ENCODE measurements at regions of chr7 and their contacts with region 1.

Region 1: GRCh38 chr7:74094224-74095101 is 10.9 kb downstream of the LIMK1 start:
- DNase-seq: peak; percentile 90
- H3K4me3 Mint-ChIP-seq: peak overlapping the region; percentile 66
- H3K27ac Mint-ChIP-seq: peak overlapping the region; percentile 75
- H3K4me1 Mint-ChIP-seq: peaks cover 18% of the 10 kb centered on the region
- H3K27me3 Mint-ChIP-seq: no peaks in the 10 kb centered on the region

Region 2: DNA sequence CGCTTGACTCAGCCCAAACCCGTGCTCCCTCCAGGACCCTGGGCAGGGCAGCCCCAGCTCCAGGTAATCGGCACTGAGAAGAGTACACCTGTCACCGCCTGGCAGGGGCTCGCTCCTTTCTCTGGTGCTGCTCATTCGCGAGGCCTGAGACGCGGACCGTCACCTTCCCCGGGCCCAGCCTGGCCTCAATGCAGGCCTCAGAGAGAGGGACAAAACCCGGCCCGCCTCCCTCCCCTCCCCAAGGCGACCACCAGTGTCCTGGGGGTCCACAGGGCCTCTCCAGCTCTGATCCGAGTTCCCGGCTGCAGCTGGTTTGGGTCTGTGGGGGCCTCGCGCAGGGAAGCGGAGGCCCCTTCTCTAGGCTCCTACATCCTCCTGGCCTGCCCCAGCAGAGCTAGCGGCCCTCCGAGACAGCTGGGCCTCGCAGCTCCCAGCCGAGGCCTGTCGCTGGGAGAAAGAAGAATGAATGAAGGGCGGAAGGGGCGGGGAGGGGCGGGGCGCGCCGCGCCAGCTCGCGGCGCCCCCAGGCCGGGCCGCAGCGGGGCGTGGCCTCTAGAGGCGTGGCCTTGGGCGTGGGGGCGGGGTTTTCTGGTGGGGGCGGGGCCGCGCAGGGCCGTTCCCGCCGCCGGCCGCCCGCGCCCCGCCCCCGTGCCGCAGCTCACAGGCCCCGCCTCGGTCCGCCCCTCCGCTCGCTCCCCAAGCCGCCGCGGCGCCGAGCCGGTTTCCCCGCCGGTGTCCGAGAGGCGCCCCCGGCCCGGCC is 11.2 kb before region 1 on chr7 and contains the start of gene LIMK1:
- CTCF ChIA-PET with region 1: no interaction called
- intact Hi-C with region 1: loop called (anchors 1 kb)
- DNase-seq: peak; percentile 80
- H3K4me3 Mint-ChIP-seq: peak within 1 kb of the TSS; percentile 78
- H3K27ac Mint-ChIP-seq: peak within 1 kb of the TSS; percentile 76
- H3K4me1 Mint-ChIP-seq: peaks cover 10% of the 10 kb centered on the region
- H3K27me3 Mint-ChIP-seq: no peaks in the 10 kb centered on the region
- total RNA-seq, gene LIMK1: 7.9 to 9.2 TPM